ENCODE measurements at regions of chr1 and their contacts with region 1.

Region 1: DNA sequence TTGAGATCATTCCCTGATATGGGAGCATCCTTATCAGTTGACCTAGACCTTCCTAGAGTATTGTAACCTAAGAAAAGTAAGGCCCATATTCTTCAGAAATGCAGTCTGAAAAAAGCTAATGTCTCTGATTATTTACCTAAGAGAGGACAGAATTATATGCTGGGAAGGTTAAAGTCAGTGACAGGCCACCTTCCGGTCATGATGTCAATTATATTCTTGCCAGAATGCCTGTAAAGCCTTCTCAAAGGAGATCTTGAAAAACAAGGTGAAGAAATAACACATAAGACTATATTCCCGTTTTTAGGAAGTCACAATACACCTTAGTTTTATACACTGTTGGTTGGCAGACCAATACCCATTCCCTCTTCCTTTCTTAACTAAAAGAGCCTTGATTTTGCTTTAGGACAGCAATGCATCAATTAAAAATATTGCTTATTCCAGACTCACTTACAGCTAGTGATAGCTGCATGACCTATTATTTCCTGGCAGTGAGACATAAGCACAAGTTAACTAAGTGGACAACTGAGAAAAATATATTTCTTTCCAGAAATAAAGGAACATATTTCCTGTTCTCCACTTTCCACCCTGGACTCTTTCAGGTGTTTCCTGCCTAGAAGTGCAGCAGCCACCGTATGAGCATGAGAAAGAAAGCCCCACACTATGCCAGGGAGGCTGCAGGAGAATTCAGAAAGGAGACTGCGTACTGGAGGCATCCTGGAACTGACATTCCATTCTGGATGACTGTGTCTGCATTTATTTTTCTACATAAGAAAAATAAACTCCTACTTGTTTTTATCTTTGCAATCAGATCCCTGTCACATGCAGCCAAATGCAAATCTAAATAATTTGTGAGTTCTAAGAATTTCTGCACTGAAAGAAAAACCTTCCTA is 332.9 kb upstream of the PTBP2 start:
- DNase-seq: peak; percentile 87
- ATAC-seq: peak; percentile 99
- H3K4me3 ChIP-seq: no peak overlapping the region
- H3K27ac ChIP-seq: no peak overlapping the region
- H3K4me1 ChIP-seq: peaks cover 7% of the 10 kb centered on the region
- H3K27me3 ChIP-seq: no peaks in the 10 kb centered on the region
- CTCF ChIP-seq: no peak
- POLR2A ChIP-seq: no peak
- RAD21 ChIP-seq: no peak

Region 2: GRCh38 chr1:96206451-96206850 is 182.2 kb before region 1 on chr1:
- CTCF ChIA-PET with region 1: no interaction called
- POLR2A ChIA-PET with region 1: no interaction called
- dilution Hi-C with region 1: no loop called
- in situ Hi-C with region 1: no loop called
- intact Hi-C with region 1: no loop called
- DNase-seq: no peak
- ATAC-seq: no peak
- H3K4me3 ChIP-seq: no peak overlapping the region
- H3K27ac ChIP-seq: no peak overlapping the region
- H3K4me1 ChIP-seq: no peaks in the 10 kb centered on the region
- H3K27me3 ChIP-seq: no peaks in the 10 kb centered on the region; the same call in 1 of the 2 replicates
- CTCF ChIP-seq: no peak
- POLR2A ChIP-seq: no peak
- RAD21 ChIP-seq: no peak

Region 3: DNA sequence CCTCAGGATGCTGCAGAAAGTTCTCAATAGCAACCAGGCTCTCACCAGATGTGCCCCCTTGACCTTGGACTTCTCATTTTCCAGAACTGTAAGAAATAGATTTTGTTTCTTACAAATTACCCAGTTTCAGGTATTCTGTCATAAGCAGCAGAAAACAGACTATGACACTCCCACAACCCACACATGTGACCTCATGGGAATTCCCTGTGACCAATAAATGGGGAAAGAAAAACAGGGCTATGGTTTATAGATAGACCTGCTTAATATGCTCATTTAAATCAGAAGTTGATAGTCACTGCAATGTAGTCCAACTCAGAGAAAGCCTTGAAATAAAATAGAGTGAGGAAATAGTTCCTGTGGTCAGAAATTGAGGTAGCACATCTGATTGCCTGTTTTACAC is 48.0 kb before region 1 on chr1:
- CTCF ChIA-PET with region 1: no interaction called
- POLR2A ChIA-PET with region 1: no interaction called
- dilution Hi-C with region 1: no loop called
- in situ Hi-C with region 1: no loop called
- intact Hi-C with region 1: no loop called
- DNase-seq: no peak
- ATAC-seq: no peak
- H3K4me3 ChIP-seq: no peak overlapping the region
- H3K27ac ChIP-seq: no peak overlapping the region
- H3K4me1 ChIP-seq: no peaks in the 10 kb centered on the region
- H3K27me3 ChIP-seq: no peaks in the 10 kb centered on the region
- CTCF ChIP-seq: no peak
- POLR2A ChIP-seq: no peak
- RAD21 ChIP-seq: no peak

Region 4: DNA sequence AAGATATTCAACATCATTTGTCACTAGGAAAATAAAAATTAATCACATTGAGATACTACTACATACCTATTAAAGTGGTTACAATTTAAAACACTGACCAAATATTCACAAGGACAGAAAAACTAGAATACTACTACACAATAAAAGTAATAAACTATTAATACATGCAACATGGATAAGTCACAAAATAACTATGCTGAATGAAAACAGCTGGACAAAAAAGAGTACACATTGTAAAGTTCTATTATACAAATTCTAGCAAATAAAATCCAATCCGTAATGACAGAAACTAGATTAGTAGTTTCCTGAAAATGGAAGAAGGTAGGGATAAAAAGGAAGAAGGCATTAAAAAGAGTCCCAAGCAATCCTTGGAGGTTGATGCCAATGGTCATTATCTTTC is 15.8 kb before region 1 on chr1:
- CTCF ChIA-PET with region 1: no interaction called
- POLR2A ChIA-PET with region 1: no interaction called
- dilution Hi-C with region 1: no loop called
- in situ Hi-C with region 1: no loop called
- intact Hi-C with region 1: loop called (anchors 2 kb)
- DNase-seq: no peak
- ATAC-seq: no peak
- H3K4me3 ChIP-seq: no peak overlapping the region
- H3K27ac ChIP-seq: no peak overlapping the region
- H3K4me1 ChIP-seq: peaks cover 5% of the 10 kb centered on the region; the same call in 1 of the 2 replicates
- H3K27me3 ChIP-seq: no peaks in the 10 kb centered on the region
- CTCF ChIP-seq: no peak
- POLR2A ChIP-seq: no peak
- RAD21 ChIP-seq: no peak

Measured in IMR-90 (cell line).